ENCODE measurements at regions of chr17 and their contacts with region 1.

Region 1: GRCh38 chr17:16363749-16364536 is 10.7 kb upstream of the CENPV start:
- DNase-seq: peak; percentile 77
- CTCF ChIP-seq: peak; percentile 92

Region 2: GRCh38 chr17:15957206-15957605 is 406.7 kb before region 1 on chr17:
- CTCF ChIA-PET with region 1: no interaction called
- POLR2A ChIA-PET with region 1: no interaction called
- DNase-seq: no peak
- CTCF ChIP-seq: no peak

Region 3: DNA sequence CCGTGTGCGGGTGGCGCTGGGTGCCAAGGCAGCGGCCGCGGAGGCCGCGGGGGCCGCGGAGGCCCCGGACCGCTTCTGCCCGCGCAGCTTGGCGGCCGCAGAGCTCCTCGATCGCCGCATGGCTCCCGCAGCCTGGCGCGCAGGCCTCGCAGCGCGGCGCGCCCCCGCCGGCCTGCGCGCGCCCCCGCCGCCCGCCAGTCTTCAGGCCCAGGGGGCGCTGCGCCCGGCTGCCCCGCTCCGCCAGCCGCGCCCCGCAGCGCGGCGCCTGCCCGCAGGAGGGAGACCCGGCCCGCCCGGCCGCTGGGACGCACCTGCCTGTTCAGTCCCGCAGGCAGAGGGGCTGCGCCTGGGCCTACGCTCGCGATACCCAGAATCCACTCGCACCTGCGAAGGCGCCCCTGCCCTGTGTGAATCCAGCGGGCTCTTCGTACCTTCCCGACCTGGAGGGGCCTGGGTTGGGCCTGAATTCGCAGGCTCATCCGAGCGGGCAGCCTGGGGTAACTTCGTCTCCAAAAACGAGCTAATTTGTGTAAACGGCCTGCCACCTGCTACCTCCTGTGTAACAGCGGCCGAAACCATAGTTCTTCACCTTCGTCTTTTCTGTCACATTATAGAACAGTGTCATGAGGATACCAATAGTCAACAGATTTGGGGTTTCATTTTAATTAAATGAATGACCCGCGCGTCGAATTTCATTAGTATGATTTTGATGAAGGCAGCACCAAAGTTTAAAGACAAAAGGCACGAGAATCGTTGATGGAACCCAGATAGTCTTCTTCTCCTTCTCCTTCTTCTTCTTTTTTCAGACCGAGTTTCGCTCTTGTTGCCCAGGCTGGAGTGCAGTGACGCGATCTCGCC is 10.4 kb before region 1 on chr17 and contains the start of gene CENPV:
- CTCF ChIA-PET with region 1: interaction called, 112 read pairs
- POLR2A ChIA-PET with region 1: interaction called, 5 read pairs
- DNase-seq: peak; percentile 85
- CTCF ChIP-seq: peak; percentile 67

Region 4: GRCh38 chr17:16407911-16408588 is 44.1 kb after region 1 on chr17:
- CTCF ChIA-PET with region 1: interaction called, 69 read pairs
- POLR2A ChIA-PET with region 1: interaction called, 3 read pairs
- DNase-seq: peak; percentile 87
- CTCF ChIP-seq: no peak

Region 5: GRCh38 chr17:16438557-16439302 is 74.8 kb after region 1 on chr17:
- CTCF ChIA-PET with region 1: interaction called, 23 read pairs
- POLR2A ChIA-PET with region 1: interaction called, 5 read pairs
- DNase-seq: peak; percentile 99
- CTCF ChIP-seq: no peak

Region 6: DNA sequence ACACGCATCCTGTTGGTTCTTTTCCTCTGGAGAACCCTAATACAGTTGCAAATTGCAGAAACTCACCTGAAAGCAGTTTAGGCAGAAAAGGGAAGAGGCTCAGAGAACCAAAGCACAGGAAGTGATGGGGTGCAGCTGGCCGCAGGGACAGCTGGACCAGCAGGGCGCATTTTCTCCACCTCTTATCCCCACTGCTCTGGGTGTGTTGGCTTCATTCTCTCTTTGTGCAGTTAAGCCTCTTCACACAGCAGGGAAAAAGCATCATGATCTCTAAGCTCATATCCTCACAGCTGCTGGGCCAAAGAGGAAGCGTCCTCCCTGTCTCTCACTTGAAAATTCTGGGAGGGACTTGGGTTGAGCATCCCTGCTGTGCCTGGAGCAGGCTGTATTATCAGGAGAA is 148.1 kb after region 1 on chr17:
- CTCF ChIA-PET with region 1: interaction called, 11 read pairs
- POLR2A ChIA-PET with region 1: no interaction called
- DNase-seq: no peak
- CTCF ChIP-seq: no peak

Region 7: GRCh38 chr17:16537130-16537458 is 173.2 kb after region 1 on chr17:
- CTCF ChIA-PET with region 1: interaction called, 11 read pairs
- POLR2A ChIA-PET with region 1: no interaction called
- DNase-seq: no peak
- CTCF ChIP-seq: no peak

Measured in GM10248 (cell line).